Aorta (tissue), 5 donors: ENCODE measurements at regions of chr5 and their contacts with region 1.

Region 1: GRCh38 chr5:16489322-16489791 is 23.8 kb upstream of the ZNF622 start:
- DNase-seq: no peak
- ATAC-seq: peak; percentile 77
- H3K4me3 ChIP-seq: no peak overlapping the region
- H3K27ac ChIP-seq: no peak overlapping the region
- H3K4me1 ChIP-seq: no peaks in the 10 kb centered on the region
- H3K27me3 ChIP-seq: no peaks in the 10 kb centered on the region

Region 2: DNA sequence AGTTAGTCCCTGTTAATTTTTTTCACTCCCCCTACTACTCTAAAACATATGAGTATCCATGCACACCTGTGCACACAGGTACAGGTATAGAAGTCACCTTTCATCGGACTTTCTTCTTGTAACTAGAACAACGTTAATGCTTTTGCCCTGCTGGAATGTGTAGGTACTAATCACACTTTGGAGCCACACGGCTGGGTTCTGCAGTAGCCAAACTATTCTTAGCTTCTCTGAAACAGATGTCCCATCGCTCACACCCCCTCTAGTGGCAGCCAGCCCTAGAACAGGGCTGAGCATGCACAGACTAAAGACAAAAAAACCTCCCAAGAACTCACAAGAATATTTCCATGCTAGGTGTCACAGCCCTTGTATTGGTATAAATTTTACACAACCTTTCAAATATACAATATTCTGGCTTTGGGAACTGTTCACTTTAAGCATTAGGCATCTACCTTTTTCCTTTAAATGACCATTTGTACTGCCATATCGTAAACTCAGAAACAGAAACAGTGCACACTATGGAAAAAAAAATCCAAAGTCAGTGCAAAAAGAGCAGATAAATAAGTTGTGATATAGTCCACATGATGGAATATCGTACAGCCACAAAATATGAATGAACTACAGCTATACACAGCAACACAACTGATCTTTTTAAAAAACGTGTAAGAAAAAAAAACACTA is 63.4 kb after region 1 on chr5:
- intact Hi-C with region 1: loop called (anchors 1 to 5 kb)
- DNase-seq: peak; percentile 75 to 88
- ATAC-seq: peak; percentile 71
- H3K4me3 ChIP-seq: no peak overlapping the region
- H3K27ac ChIP-seq: no peak overlapping the region
- H3K4me1 ChIP-seq: no peaks in the 10 kb centered on the region
- H3K27me3 ChIP-seq: no peaks in the 10 kb centered on the region

Region 3: DNA sequence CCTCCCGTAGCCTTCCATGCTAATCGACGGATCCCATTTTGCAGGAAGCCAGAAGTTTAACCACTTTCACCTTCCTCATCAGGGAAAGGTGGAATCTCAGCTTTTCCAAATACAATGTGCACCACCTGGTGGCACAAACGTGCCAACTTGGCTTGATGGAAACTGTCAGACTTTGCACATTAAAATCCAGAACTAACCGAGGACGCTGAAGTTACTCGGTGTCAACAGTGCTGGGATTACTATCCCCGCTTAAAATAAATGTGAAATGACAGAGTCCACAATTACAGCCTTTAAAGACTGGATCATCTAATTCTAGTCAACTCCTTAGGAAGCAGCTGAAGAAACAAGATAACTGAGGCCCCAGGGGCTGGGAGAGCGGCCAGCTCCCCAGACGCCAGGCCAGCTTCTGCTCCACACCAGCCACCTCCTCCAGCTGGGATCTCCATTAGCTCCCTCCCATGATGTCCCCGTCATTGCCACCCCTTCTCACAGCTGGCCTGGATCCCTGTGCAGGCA is 177.6 kb after region 1 on chr5:
- intact Hi-C with region 1: loop called in 1 of 2 experiments (anchors 5 kb)
- DNase-seq: no peak
- ATAC-seq: no peak
- H3K4me3 ChIP-seq: no peak overlapping the region
- H3K27ac ChIP-seq: no peak overlapping the region
- H3K4me1 ChIP-seq: no peaks in the 10 kb centered on the region
- H3K27me3 ChIP-seq: no peaks in the 10 kb centered on the region

Region 4: GRCh38 chr5:16791036-16791705 is 301.8 kb after region 1 on chr5:
- intact Hi-C with region 1: loop called in 1 of 2 experiments (anchors 10 kb)
- DNase-seq: no peak
- ATAC-seq: peak; percentile 62
- H3K4me3 ChIP-seq: no peak overlapping the region
- H3K27ac ChIP-seq: no peak overlapping the region
- H3K4me1 ChIP-seq: no peaks in the 10 kb centered on the region
- H3K27me3 ChIP-seq: no peaks in the 10 kb centered on the region

Region 5: GRCh38 chr5:17189381-17190036 is 700.2 kb after region 1 on chr5:
- intact Hi-C with region 1: loop called in 1 of 2 experiments (anchors 10 kb)
- DNase-seq: peak; percentile 80 to 90
- ATAC-seq: peak; percentile 69
- H3K4me3 ChIP-seq: no peak overlapping the region
- H3K27ac ChIP-seq: no peak overlapping the region
- H3K4me1 ChIP-seq: no peaks in the 10 kb centered on the region
- H3K27me3 ChIP-seq: no peaks in the 10 kb centered on the region

Region 6: DNA sequence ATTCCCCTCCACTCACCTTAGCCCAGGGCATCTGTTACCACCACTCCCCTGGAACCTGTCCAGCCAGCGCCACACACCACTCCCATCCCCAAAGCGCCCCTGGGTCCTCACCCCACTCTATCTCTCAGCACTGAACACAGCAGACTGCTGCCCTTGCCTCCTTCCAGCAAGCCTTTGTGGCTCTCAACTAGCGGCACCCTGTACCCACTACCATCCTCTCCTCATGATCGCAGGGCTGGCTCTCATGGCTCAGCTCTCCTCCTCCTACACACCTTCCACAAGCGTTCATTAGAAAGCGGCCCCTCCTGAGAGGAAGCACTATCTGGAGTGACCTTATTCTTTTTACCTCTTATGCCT is 714.8 kb after region 1 on chr5:
- intact Hi-C with region 1: loop called (anchors 5 to 10 kb)
- DNase-seq: no peak
- ATAC-seq: no peak
- H3K4me3 ChIP-seq: no peak overlapping the region
- H3K27ac ChIP-seq: no peak overlapping the region
- H3K4me1 ChIP-seq: no peaks in the 10 kb centered on the region
- H3K27me3 ChIP-seq: peaks cover 0 to 1% of the 10 kb centered on the region in 2 donors